ENCODE measurements at regions of chr6 and their contacts with region 1.

Region 1: DNA sequence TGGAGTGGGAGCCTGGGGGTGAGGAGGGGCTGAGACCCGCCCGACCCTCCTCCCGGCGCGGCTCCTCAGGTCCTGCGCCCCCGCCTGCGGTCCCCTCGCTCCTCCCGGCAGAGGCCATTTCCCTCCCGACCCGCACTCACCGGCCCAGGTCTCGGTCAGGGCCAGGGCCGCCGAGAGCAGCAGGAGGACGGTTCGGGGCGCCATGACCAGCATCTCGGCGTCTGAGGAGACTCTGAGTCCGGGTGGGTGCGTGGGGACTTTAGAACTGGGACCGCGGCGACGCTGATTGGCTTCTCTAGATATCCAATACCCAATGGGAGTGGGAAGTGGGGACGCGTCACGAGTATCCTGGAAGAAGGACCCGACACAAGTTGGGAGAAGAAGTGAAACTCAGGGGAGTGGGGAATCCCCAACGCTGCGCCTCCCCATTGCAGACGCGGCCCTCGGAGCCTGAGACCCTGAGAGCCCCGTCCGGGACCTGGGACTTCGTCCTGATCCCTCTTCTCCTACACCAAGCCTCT is at the start of gene HLA-B:
- DNase-seq: peak; percentile 87
- H3K4me3 Mint-ChIP-seq: peak within 1 kb of the TSS; percentile 99
- H3K27ac Mint-ChIP-seq: peak within 1 kb of the TSS; percentile 99
- H3K4me1 Mint-ChIP-seq: peaks cover 57% of the 10 kb centered on the region
- H3K27me3 Mint-ChIP-seq: peaks cover 3% of the 10 kb centered on the region
- total RNA-seq, gene HLA-B: 5,151 to 5,157 TPM

Region 2: DNA sequence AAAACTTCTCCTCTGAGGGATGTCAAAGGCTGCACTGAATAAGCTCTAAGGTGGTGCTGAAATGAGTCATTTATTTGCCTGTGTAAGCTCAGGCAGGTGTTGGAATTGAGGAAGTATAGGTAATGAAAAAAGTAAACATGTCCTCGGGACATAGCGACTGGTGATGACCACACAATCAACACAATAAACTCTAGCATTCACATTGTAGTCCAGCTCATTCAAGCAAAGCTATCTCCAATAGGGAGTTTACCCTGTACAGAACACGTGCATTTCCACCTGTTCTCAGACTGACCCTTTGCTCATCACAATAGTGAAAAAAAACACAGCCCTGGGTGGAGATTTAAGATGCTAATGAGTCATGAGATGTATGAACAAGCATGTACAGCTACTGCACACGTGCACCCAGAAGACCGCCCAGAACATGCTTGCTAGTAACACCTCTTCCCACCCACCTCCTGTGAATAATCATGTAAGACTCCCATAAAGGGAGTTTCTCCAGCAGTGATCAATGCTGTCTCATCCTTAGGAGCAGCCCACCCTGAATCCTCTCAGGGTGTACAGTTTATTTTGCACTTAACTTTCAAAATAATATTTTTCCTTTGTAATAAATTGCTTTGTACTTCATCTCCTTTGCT is 153.5 kb before region 1 on chr6:
- CTCF ChIA-PET with region 1: no interaction called
- POLR2A ChIA-PET with region 1: interaction called, 36 read pairs
- DNase-seq: peak; percentile 58
- H3K4me3 Mint-ChIP-seq: peak overlapping the region; percentile 86
- H3K27ac Mint-ChIP-seq: peak overlapping the region; percentile 96
- H3K4me1 Mint-ChIP-seq: peaks cover 65% of the 10 kb centered on the region
- H3K27me3 Mint-ChIP-seq: no peaks in the 10 kb centered on the region

Region 3: DNA sequence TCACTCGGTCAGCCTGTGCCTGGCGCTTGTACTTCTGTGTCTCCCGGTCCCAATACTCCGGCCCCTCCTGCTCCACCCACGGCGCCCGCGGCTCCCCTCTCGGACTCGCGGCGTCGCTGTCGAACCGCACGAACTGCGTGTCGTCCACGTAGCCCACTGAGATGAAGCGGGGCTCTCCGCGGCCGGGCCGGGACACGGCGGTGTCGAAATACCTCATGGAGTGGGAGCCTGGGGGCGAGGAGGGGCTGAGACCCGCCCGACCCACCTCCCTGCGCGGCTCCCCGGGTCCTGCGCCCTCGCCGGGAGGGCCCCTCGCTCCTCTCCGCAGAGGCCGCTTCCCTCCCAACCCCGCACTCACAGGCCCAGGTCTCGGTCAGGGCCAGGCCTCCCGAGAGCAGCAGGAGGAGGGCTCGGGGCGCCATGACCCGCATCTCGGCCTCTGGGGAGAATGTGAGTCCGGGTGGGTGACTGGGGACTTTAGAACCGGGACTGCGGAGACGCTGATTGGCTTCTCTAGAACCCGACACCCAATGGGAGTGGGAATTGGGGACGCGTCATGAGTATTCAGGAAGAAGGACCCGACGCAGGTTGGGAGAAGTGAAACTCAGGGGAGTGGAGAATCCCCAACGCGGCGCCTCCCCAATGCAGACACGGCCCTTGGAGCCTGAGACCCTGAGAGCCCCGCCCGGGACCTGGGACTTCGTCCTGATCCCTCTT is 85.2 kb before region 1 on chr6 and contains the start of gene HLA-C:
- CTCF ChIA-PET with region 1: interaction called, 4 read pairs
- POLR2A ChIA-PET with region 1: interaction called, 66 read pairs
- DNase-seq: peak; percentile 94
- H3K4me3 Mint-ChIP-seq: peak within 1 kb of the TSS; percentile 96
- H3K27ac Mint-ChIP-seq: peak within 1 kb of the TSS; percentile 99
- H3K4me1 Mint-ChIP-seq: peaks cover 56% of the 10 kb centered on the region
- H3K27me3 Mint-ChIP-seq: peaks cover 14% of the 10 kb centered on the region
- total RNA-seq, gene HLA-C: 1,690 to 1,696 TPM

Region 4: DNA sequence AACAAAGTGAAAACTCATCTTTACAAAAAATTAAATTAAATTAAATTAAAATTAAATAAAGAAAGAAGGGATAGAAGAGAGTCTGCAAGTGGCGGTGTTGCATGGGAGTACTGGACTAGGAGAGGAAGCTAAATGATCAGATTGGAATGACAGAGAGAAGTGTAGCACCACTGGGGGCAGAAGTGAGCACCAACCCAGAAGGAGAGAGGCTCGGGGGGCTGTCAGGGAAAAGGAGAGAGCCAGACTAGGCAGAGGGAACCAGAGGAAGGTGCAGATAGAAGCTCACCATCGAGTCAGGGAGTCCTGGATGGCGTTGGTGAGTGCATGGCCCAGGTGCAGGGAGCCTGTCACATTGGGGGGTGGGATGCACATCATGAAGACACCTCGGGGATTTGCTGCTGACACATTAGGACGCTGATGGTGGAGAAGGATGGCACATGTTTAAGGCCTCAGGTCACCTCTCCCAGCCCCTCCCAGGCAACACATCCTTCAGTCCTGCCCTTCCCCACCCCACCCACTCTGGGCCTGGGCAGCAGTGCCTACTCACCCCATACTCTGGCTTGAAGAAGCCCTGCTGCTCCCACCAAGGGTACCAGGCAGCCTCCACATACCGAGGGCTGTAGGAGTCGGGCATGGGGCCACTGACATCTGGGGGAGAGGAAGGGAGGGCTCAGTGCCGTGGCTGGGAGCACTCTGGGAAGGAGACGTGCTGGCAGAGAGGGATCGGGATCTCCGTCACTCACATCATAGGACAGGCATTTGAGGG is 434.5 kb after region 1 on chr6:
- CTCF ChIA-PET with region 1: no interaction called
- POLR2A ChIA-PET with region 1: no interaction called
- DNase-seq: peak; percentile 37
- H3K4me3 Mint-ChIP-seq: no peak overlapping the region
- H3K27ac Mint-ChIP-seq: peak overlapping the region; percentile 46
- H3K4me1 Mint-ChIP-seq: peaks cover 46% of the 10 kb centered on the region
- H3K27me3 Mint-ChIP-seq: no peaks in the 10 kb centered on the region

Measured in activated CD4-positive, alpha-beta memory T cell treated with anti-CD3 and anti-CD28 coated beads, Interleukin-2, amount 10 ng/mL, durations not matched to agents 7 days and 5 days (primary cell).